ENCODE measurements at regions of chr3 and their contacts with region 1.

Region 1: DNA sequence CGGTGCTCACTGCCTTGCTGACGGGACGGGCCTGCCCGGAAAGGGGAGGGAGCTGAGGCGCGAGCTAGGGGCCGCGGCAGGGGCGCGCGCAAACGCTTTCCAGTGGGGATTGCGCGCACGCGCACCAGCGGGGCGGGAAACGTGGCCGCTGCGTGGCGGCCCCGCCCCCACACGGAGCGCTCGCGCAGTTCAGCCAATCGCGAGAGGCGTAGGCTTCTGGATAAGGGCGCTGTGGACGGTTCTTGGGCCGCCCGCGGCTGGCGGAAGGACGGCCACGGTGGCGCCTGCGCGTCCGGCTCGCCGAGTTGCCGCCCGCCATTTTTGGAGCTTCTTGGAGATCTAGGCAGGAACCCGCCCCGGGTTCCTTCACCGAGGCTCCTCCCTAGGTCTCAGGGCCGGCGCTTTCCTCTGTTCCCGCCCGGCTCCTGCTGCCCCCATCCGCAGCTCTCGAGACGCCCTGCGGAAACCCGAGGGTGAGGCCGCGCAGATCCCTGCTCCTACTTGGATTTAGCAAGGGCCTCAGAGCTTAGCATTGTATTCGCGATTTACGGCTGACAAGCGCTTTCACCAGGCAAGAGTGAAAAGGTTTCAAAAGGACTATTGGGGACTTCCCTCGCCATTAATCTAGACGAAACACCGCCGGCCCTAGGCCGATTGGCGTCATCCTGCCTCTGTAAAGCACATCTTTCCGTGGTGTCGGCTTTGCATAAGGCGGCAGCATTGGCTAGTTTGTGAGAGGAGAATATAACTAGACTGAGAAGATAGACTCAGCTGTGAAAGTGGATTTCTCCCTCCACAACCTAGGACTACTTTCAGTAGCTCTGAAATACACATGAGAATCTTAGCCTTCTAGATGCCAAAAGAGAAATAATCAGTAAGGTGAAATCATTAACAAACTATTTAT is 496 bp upstream of the STAG1 start:
- DNase-seq: peak; percentile 100
- H3K4me3 ChIP-seq: peak overlapping the region; percentile 54 to 90 (median 60)
- H3K27ac ChIP-seq: peak overlapping the region; percentile 95 to 100 (median 98)
- H3K4me1 ChIP-seq: peaks cover 30 to 56% (median 42%) of the 10 kb centered on the region in 6 donors
- H3K27me3 ChIP-seq: no peaks in the 10 kb centered on the region
- CTCF ChIP-seq: peak in 9 of 11 experiments; percentile 14 to 100 (median 100)
- POLR2A ChIP-seq: peak in 2 of 3 donors; percentile 47 to 51

Region 2: GRCh38 chr3:136075218-136075808 is 677.4 kb before region 1 on chr3:
- intact Hi-C with region 1: loop called (anchors 5 kb)
- DNase-seq: no peak
- H3K4me3 ChIP-seq: no peak overlapping the region
- H3K27ac ChIP-seq: peak overlapping the region in 1 of 8 donors; percentile 11
- H3K4me1 ChIP-seq: peaks cover 0 to 17% (median 1%) of the 10 kb centered on the region in 6 donors
- H3K27me3 ChIP-seq: no peaks in the 10 kb centered on the region
- CTCF ChIP-seq: peak; percentile 74 to 96 (median 91)
- POLR2A ChIP-seq: no peak

Region 3: GRCh38 chr3:136196401-136197158 is 556.1 kb before region 1 on chr3:
- intact Hi-C with region 1: loop called (anchors 10 kb)
- DNase-seq: peak; percentile 99
- H3K4me3 ChIP-seq: peak overlapping the region; percentile 90 to 97 (median 94)
- H3K27ac ChIP-seq: peak overlapping the region; percentile 98 to 100 (median 100)
- H3K4me1 ChIP-seq: peaks cover 23 to 47% (median 30%) of the 10 kb centered on the region in 6 donors
- H3K27me3 ChIP-seq: no peaks in the 10 kb centered on the region
- CTCF ChIP-seq: peak in 2 of 11 experiments; percentile 2 to 9
- POLR2A ChIP-seq: peak in 2 of 3 donors; percentile 39 to 54

Region 4: DNA sequence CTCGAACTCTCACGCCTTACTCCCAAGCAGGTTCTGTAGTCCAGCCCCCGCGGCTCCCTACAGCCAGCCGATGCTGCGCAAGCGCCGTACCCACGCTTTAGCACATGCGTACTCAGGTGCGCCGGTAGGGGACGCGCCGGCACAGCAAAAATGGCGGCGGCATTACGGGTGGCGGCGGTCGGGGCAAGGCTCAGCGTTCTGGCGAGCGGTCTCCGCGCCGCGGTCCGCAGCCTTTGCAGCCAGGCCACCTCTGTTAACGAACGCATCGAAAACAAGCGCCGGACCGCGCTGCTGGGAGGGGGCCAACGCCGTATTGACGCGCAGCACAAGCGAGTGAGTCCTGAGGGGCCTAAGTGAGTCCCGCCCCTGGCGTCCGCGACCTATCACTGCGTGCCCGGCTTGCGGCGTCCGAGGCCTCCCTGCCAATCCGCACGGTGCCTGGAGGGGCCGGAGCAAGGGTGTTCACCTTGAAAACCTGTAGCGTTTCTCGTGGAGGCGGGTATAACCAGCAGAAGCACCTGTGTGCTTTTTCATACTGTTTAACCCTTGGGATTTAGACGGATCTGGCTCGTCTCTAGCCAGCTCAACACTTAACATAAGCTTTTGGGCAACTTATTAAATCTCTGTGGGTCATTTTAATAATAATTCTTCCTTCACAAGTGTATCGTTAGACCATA is 502.3 kb before region 1 on chr3 and contains the start of gene PCCB:
- intact Hi-C with region 1: loop called (anchors 10 kb)
- DNase-seq: peak; percentile 99
- H3K4me3 ChIP-seq: peak within 1 kb of the TSS; percentile 60 to 95 (median 72)
- H3K27ac ChIP-seq: peak within 1 kb of the TSS; percentile 87 to 95 (median 90)
- H3K4me1 ChIP-seq: peaks cover 9 to 23% (median 20%) of the 10 kb centered on the region in 6 donors
- H3K27me3 ChIP-seq: no peaks in the 10 kb centered on the region
- CTCF ChIP-seq: peak; percentile 70 to 96 (median 89)
- POLR2A ChIP-seq: no peak
- total RNA-seq, gene PCCB: 17.3 to 24.7 (median 21.0) TPM

Region 5: GRCh38 chr3:136390574-136390973 is 362.1 kb before region 1 on chr3:
- intact Hi-C with region 1: loop called (anchors 5 kb)
- DNase-seq: no peak
- H3K4me3 ChIP-seq: no peak overlapping the region
- H3K27ac ChIP-seq: no peak overlapping the region
- H3K4me1 ChIP-seq: peaks cover 0 to 5% (median 0%) of the 10 kb centered on the region in 6 donors
- H3K27me3 ChIP-seq: no peaks in the 10 kb centered on the region
- CTCF ChIP-seq: no peak
- POLR2A ChIP-seq: no peak

Region 6: GRCh38 chr3:136792556-136793330 is 40.1 kb after region 1 on chr3:
- intact Hi-C with region 1: no loop called
- DNase-seq: no peak
- H3K4me3 ChIP-seq: no peak overlapping the region
- H3K27ac ChIP-seq: no peak overlapping the region
- H3K4me1 ChIP-seq: peaks cover 0 to under 1% (median 0%) of the 10 kb centered on the region in 6 donors
- H3K27me3 ChIP-seq: no peaks in the 10 kb centered on the region
- CTCF ChIP-seq: no peak
- POLR2A ChIP-seq: no peak

Region 7: DNA sequence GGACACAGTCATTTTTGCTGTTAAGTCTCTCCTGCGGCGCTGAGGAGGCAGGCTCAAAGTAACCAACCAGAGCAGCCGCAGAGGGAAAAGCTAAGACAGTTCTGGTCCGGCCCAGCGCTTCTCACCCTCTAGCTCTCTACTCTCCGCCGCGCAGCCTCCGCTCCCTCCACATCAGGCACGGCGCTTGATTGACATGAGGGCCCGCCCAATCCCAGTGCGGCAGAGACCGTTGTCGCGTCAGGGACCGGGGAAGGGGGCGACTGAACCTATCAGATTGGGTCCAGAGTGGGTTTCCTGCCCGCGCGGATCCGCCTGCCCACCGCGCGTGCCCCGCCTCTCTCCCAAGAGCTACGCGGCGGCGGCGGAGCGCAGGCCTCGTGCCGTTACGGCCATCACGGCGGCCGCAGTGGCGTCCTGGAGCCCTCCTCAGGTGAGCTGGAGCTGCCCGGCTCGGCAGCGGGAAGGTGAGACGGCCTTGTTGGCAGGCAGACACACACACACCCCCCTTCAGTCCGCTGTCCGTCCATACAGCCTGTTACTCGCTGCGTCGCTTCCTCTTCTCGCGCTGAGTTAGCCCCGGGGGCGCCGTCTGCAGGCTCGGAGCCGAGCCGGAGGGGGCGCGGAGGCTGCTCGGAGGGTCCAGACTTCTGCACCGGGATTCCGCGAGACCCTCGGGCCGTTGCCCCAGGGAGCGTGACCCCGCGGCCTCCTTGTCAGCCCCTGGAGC is 109.4 kb after region 1 on chr3 and contains the start of gene NCK1:
- intact Hi-C with region 1: loop called (anchors 5 kb)
- DNase-seq: peak; percentile 99
- H3K4me3 ChIP-seq: peak within 1 kb of the TSS; percentile 75 to 96 (median 88)
- H3K27ac ChIP-seq: peak within 1 kb of the TSS; percentile 94 to 98 (median 96)
- H3K4me1 ChIP-seq: peaks cover 8 to 79% (median 36%) of the 10 kb centered on the region in 6 donors
- H3K27me3 ChIP-seq: no peaks in the 10 kb centered on the region
- CTCF ChIP-seq: peak in 8 of 11 experiments; percentile 17 to 45 (median 31)
- POLR2A ChIP-seq: peak in 2 of 3 donors; percentile 79 to 84
- total RNA-seq, gene NCK1: 41.9 to 54.7 (median 48.3) TPM

Region 8: DNA sequence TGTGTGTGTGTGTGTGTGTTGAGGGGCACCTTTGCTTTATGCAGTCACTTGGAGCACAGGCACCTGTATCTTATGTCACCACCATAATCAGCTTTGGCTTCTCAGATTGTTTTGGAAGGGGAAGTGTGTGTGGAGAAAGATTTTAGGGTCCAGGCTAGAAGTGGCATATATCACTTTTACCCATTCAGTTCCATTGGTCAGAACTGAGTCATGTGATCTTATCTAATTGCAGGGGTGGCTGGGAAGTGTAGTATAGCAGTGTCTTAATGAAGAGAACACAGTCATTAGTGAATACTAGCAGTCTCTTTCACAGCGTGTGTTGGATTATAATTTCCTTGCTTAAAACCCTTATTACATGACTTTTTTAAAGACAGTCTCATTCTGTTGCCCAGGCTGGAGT is 129.9 kb after region 1 on chr3:
- intact Hi-C with region 1: no loop called
- DNase-seq: no peak
- H3K4me3 ChIP-seq: no peak overlapping the region
- H3K27ac ChIP-seq: peak overlapping the region in 1 of 8 donors; percentile 29
- H3K4me1 ChIP-seq: peaks cover 8 to 67% (median 45%) of the 10 kb centered on the region in 6 donors
- H3K27me3 ChIP-seq: no peaks in the 10 kb centered on the region
- CTCF ChIP-seq: no peak
- POLR2A ChIP-seq: no peak

Region 9: GRCh38 chr3:137013955-137014688 is 261.4 kb after region 1 on chr3:
- intact Hi-C with region 1: loop called (anchors 5 kb)
- DNase-seq: peak; percentile 94
- H3K4me3 ChIP-seq: peak overlapping the region; percentile 21 to 66 (median 39)
- H3K27ac ChIP-seq: peak overlapping the region in 7 of 8 donors; percentile 15 to 69 (median 51)
- H3K4me1 ChIP-seq: peaks cover 2 to 14% (median 11%) of the 10 kb centered on the region in 6 donors
- H3K27me3 ChIP-seq: no peaks in the 10 kb centered on the region
- CTCF ChIP-seq: peak; percentile 82 to 95 (median 90)
- POLR2A ChIP-seq: no peak

Measured in spleen (tissue), 13 donors.